Dendritic cell treated with granulocyte-macrophage colony-stimulating factor and Interleukin-4, amounts not matched to agents 40 ng/mL and 50 ng/mL, for 4 days (primary cell): ENCODE measurements at regions of chr3 and their contacts with region 1.

Region 1: GRCh38 chr3:141738022-141738890 is at the start of gene RNF7:
- H3K4me3 Mint-ChIP-seq: peak within 1 kb of the TSS; percentile 99
- H3K27ac Mint-ChIP-seq: peak within 1 kb of the TSS; percentile 100
- H3K4me1 Mint-ChIP-seq: peaks cover 46% of the 10 kb centered on the region
- H3K27me3 Mint-ChIP-seq: no peaks in the 10 kb centered on the region

Region 2: DNA sequence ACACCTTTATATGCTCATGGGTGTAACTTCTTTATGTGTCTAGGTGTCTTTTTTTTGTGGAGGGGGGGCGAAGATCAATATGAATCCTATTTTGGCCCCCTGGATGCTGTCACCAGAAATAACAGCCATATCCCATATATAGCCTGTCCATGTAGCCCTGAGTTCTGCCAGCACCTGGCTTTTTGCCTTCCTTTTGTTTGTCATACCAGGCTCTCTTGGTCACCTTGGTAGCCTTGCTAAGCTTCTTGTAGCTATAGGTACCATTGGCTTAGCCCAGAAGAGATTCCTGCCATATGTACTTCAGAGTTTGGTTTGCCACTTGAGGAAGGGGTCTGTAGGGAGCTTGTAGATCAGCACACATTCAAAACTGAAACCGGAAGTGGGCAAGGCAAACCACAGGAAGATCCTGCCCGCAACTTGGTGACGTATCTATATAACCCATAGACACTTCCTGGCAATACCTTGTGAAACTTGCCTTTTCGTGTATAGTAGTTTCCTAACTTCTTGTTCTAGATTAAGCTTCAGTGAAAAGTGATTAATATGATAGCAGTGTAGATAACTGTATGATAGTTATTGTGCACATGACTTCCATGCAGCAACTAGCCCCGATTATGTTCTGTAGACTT is 239.5 kb before region 1 on chr3:
- intact Hi-C with region 1: loop called (anchors 10 kb)
- H3K4me3 Mint-ChIP-seq: peak overlapping the region; percentile 30
- H3K27ac Mint-ChIP-seq: peak overlapping the region; percentile 81
- H3K4me1 Mint-ChIP-seq: peaks cover 34% of the 10 kb centered on the region
- H3K27me3 Mint-ChIP-seq: no peaks in the 10 kb centered on the region

Region 3: DNA sequence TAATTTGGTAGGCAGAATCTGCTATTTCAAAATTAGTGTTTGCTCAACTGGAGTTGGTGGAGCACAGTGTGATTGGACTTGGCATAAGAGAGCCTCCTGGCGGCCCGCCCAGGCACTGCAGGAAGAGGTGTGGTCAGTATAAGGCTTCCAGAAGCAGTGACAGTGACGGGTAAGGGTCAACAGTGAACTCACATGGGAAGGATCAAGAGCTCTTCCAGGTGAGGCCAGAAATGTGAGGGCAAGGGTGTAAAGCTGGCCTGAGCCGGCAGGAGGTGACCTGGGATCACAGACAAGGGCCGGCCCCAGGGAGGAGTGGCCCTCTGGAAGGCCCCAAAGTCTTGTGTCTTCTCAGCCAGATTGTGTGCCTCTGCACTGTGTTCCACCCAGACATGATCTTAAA is 93.3 kb before region 1 on chr3:
- intact Hi-C with region 1: loop called (anchors 5 kb)
- H3K4me3 Mint-ChIP-seq: no peak overlapping the region
- H3K27ac Mint-ChIP-seq: no peak overlapping the region
- H3K4me1 Mint-ChIP-seq: peaks cover 12% of the 10 kb centered on the region
- H3K27me3 Mint-ChIP-seq: no peaks in the 10 kb centered on the region

Region 4: DNA sequence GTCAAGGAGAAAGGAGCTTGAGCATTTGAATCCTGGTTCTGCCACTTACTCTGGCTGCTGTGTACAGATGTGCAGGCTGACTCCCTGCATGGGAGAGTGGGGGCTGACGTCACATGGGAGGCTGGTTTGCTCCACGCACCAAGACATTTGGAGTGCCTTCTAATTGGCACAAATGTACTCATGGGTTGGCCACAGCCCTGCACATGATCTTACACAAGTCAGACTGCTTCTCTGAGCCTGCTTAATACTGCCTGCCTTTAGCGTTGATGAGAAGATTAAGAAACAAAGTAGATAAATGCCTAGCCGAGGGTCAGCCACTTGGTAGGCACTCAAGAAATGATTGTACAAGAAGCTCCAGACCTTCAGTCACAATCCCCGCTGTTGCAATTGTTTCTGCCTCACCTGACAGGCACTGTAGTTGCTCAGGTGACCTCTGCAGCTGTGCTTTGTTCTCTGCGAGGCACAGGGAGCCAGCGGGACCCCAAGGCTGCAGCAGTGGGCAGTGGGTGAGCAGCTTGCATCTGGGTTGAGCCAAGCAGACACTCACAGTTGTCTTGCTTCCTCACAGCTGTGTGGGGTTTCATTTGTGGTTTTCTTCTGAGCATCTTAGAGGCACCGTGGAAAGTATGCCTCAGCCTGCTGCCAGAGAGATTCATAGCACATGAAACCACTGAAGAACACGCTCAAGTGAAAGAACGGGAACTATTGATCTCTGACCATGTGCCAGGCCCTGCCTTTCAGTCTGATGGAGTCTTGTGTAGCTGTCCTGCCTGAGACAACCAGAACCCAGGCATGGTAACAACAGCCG is 58.0 kb after region 1 on chr3:
- intact Hi-C with region 1: loop called (anchors 5 kb)
- H3K4me3 Mint-ChIP-seq: no peak overlapping the region
- H3K27ac Mint-ChIP-seq: peak overlapping the region; percentile 95
- H3K4me1 Mint-ChIP-seq: peaks cover 35% of the 10 kb centered on the region
- H3K27me3 Mint-ChIP-seq: peaks cover 2% of the 10 kb centered on the region

Region 5: DNA sequence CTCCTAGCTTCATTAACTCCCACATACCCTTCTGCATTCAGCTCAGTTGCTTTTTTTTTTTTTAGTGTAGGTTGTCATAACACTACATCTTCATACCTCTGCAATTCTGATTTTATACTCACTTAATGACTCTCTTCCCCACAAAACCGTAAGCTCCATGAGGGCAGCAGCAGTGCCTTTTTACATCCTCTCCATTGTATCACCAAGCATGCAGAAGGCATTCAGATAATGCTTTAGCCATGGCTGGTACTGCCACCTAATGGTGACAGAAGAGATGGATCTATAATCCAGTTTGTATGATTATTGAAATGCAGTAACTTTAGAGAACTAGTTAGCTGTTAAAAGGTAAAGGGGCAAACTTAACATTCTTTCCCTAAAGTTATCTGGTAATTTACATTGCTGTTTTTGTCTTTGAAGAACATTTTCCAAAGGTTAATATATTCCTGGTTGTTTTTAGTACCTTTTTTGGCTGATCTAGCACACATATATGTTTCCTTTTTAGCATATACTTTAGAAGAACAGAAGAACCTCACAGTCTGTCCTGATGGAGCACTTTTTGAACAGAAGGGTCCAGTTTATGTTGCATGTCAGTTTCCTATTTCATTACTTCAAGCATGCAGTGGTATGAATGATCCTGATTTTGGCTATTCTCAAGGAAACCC is 175.0 kb after region 1 on chr3:
- intact Hi-C with region 1: loop called (anchors 2 kb)
- H3K4me3 Mint-ChIP-seq: no peak overlapping the region
- H3K27ac Mint-ChIP-seq: no peak overlapping the region
- H3K4me1 Mint-ChIP-seq: no peaks in the 10 kb centered on the region
- H3K27me3 Mint-ChIP-seq: no peaks in the 10 kb centered on the region

Region 6: GRCh38 chr3:142098964-142099363 is 360.7 kb after region 1 on chr3:
- intact Hi-C with region 1: no loop called
- H3K4me3 Mint-ChIP-seq: no peak overlapping the region
- H3K27ac Mint-ChIP-seq: no peak overlapping the region
- H3K4me1 Mint-ChIP-seq: peaks cover 6% of the 10 kb centered on the region
- H3K27me3 Mint-ChIP-seq: no peaks in the 10 kb centered on the region